B cell (primary cell): ENCODE measurements at regions of chr12 and their contacts with region 1.

Region 1: GRCh38 chr12:54749191-54749818 is 101.1 kb upstream of the DCD start:
- DNase-seq: peak; percentile 72
- ATAC-seq: peak; percentile 43
- H3K4me3 ChIP-seq: no peak overlapping the region
- H3K4me3 Mint-ChIP-seq: peak overlapping the region; percentile 35
- H3K27ac ChIP-seq: no peak overlapping the region
- H3K27ac Mint-ChIP-seq: no peak overlapping the region
- H3K4me1 ChIP-seq: no peaks in the 10 kb centered on the region
- H3K4me1 Mint-ChIP-seq: peaks cover 5% of the 10 kb centered on the region
- H3K27me3 ChIP-seq: no peaks in the 10 kb centered on the region
- H3K27me3 Mint-ChIP-seq: peaks cover 19% of the 10 kb centered on the region
- CTCF ChIP-seq: peak; percentile 85

Region 2: DNA sequence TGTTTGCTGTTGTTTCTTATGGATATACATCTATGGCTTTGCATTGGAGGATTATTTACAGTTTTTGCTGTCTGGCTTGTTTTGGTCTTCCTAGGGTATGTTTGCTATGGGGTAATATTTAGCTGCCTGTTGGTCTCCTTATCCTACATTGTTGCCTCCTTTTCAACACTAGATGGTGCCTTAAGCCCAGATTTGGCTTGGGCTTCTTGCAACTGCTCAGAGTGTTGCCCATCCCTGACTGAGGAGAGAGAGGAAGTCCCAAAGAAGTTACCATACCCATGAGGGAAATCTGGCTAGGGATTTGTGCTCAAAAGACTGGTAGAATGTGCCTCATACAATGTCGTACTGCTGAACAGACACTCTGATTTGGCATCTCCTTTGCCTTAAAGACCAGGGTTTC is 10.4 kb after region 1 on chr12:
- CTCF ChIA-PET with region 1: interaction called, 17 read pairs
- POLR2A ChIA-PET with region 1: no interaction called
- intact Hi-C with region 1: no loop called
- DNase-seq: no peak
- ATAC-seq: no peak
- H3K4me3 ChIP-seq: no peak overlapping the region
- H3K4me3 Mint-ChIP-seq: no peak overlapping the region
- H3K27ac ChIP-seq: no peak overlapping the region
- H3K27ac Mint-ChIP-seq: no peak overlapping the region
- H3K4me1 ChIP-seq: no peaks in the 10 kb centered on the region
- H3K4me1 Mint-ChIP-seq: no peaks in the 10 kb centered on the region
- H3K27me3 ChIP-seq: peaks cover 0 to 11% (median 5%) of the 10 kb centered on the region in 4 experiments
- H3K27me3 Mint-ChIP-seq: peaks cover 21% of the 10 kb centered on the region
- CTCF ChIP-seq: no peak

Region 3: DNA sequence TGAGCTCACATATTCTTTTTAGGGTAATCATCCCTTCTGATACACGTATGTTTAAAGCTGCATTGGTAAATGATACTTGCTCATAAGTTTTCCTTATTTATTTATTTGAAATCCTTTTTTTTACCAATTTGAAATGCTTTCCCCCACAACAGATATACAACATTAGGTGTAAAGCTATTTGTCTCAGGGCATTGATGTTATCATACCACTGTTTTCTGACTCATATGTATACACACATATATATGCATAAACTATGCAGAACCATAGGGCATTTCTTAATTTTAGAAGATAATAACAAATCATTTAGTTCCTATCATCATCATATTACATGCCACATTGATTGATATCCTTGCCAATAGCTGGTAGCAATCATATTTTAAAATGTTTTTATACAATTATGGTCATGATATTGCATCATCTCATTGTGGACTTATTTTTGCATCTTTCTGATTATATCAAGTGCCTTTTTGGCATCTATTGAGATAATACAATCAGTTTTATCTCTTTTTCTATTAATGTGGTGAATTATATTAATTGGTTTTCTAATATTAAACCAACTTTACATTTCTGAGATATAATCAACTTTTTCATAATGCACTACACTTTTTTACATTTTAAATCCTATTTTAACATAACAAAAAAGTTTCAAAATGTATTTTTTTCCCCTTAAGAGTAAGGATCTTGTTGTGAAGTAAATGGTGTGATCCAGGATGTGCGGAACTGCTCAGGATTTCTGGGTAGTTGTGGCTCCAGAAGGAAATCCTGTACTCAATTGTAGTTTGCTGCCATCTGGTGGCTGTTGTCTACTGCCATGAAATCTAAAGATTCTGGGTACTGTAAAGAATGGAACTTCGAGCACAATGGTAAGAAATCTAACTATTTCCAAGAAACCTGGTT is 393.6 kb after region 1 on chr12:
- CTCF ChIA-PET with region 1: interaction called, 7 read pairs
- POLR2A ChIA-PET with region 1: no interaction called
- intact Hi-C with region 1: loop called (anchors 2 kb)
- DNase-seq: peak; percentile 59
- ATAC-seq: no peak
- H3K4me3 ChIP-seq: no peak overlapping the region
- H3K4me3 Mint-ChIP-seq: no peak overlapping the region
- H3K27ac ChIP-seq: no peak overlapping the region
- H3K27ac Mint-ChIP-seq: no peak overlapping the region
- H3K4me1 ChIP-seq: no peaks in the 10 kb centered on the region
- H3K4me1 Mint-ChIP-seq: no peaks in the 10 kb centered on the region
- H3K27me3 ChIP-seq: no peaks in the 10 kb centered on the region
- H3K27me3 Mint-ChIP-seq: peaks cover 8% of the 10 kb centered on the region
- CTCF ChIP-seq: peak; percentile 93